ENCODE measurements at regions of chr5 and their contacts with region 1.

Region 1: DNA sequence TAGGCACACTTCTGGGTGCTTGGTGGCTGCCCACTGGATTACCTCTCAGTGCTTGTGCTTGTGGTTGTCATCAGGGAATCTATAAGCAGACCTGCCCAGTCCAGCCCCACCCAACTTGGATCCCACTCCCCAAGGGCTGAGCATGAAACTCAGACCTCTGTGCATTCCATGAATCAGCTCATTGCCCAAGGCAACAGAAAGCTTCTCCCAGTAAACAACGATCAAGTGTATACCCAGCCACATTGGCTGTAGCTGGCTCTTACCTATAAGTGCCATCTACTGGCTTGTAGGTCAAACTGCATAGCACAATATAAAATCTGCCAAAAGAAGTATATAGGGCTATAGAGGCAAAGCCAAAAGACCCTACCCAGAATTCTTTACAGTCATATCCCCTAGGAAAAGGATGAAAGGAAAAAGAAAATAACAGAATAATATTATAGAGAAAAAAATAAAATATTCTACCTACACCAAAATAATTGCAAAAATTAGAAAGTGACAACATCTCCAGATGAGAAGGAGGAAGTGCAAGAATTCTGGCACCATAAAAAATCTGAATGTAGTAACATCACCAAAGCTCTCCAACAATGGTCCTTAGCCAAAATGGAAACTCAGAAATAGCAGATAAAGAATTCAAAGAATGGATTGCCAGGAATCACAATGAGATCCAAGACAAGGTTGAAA is 321.0 kb upstream of the TRPC7 start:
- DNase-seq: peak; percentile 26
- ATAC-seq: peak; percentile 71
- H3K4me3 ChIP-seq: no peak overlapping the region
- H3K27ac ChIP-seq: no peak overlapping the region
- H3K4me1 ChIP-seq: no peaks in the 10 kb centered on the region
- H3K27me3 ChIP-seq: no peaks in the 10 kb centered on the region
- CTCF ChIP-seq: peak; percentile 47
- POLR2A ChIP-seq: no peak
- RAD21 ChIP-seq: peak; percentile 49

Region 2: GRCh38 chr5:136374003-136374402 is 312.3 kb before region 1 on chr5:
- CTCF ChIA-PET with region 1: no interaction called
- POLR2A ChIA-PET with region 1: no interaction called
- dilution Hi-C with region 1: no loop called
- in situ Hi-C with region 1: no loop called
- intact Hi-C with region 1: loop called (anchors 5 kb)
- DNase-seq: peak; percentile 12
- ATAC-seq: peak; percentile 32
- H3K4me3 ChIP-seq: no peak overlapping the region
- H3K27ac ChIP-seq: no peak overlapping the region
- H3K4me1 ChIP-seq: no peaks in the 10 kb centered on the region
- H3K27me3 ChIP-seq: no peaks in the 10 kb centered on the region
- CTCF ChIP-seq: peak; percentile 34; the same call in 1 of the 2 replicates
- POLR2A ChIP-seq: no peak
- RAD21 ChIP-seq: peak; percentile 31; the same call in 1 of the 2 replicates

Region 3: GRCh38 chr5:136750224-136750862 is 64.0 kb after region 1 on chr5:
- CTCF ChIA-PET with region 1: no interaction called
- POLR2A ChIA-PET with region 1: no interaction called
- dilution Hi-C with region 1: no loop called
- in situ Hi-C with region 1: no loop called
- intact Hi-C with region 1: no loop called
- DNase-seq: no peak
- ATAC-seq: 0 out of 2 replicates have a peak, but pooled peaks have one; percentile 21
- H3K4me3 ChIP-seq: no peak overlapping the region
- H3K27ac ChIP-seq: no peak overlapping the region
- H3K4me1 ChIP-seq: no peaks in the 10 kb centered on the region
- H3K27me3 ChIP-seq: no peaks in the 10 kb centered on the region
- CTCF ChIP-seq: no peak
- POLR2A ChIP-seq: no peak
- RAD21 ChIP-seq: no peak

Measured in IMR-90 (cell line).